Activated CD4-positive, alpha-beta T cell treated with anti-CD3 and anti-CD28 coated beads for 36 hours (primary cell): ENCODE measurements at regions of chr5 and their contacts with region 1.

Region 1: GRCh38 chr5:122295138-122295537 is 16.9 kb upstream of the SNCAIP start:
- DNase-seq: no peak
- ATAC-seq: no peak
- H3K4me3 Mint-ChIP-seq: no peak overlapping the region
- H3K27ac Mint-ChIP-seq: no peak overlapping the region
- H3K4me1 Mint-ChIP-seq: no peaks in the 10 kb centered on the region
- H3K27me3 Mint-ChIP-seq: peaks cover 10% of the 10 kb centered on the region

Region 2: GRCh38 chr5:122415030-122415800 is 120.1 kb after region 1 on chr5:
- CTCF ChIA-PET with region 1: no interaction called
- POLR2A ChIA-PET with region 1: no interaction called
- intact Hi-C with region 1: loop called in 1 of 2 experiments (anchors 5 kb)
- DNase-seq: peak; percentile 26
- ATAC-seq: peak; percentile 57
- H3K4me3 Mint-ChIP-seq: no peak overlapping the region
- H3K27ac Mint-ChIP-seq: no peak overlapping the region
- H3K4me1 Mint-ChIP-seq: no peaks in the 10 kb centered on the region
- H3K27me3 Mint-ChIP-seq: peaks cover 22% of the 10 kb centered on the region